ENCODE measurements at regions of chr11 and their contacts with region 1.

Region 1: GRCh38 chr11:45102810-45103621 is 43.4 kb upstream of the PRDM11 start:
- DNase-seq: peak; percentile 66 to 74
- ATAC-seq: peak; percentile 49 to 73; a peak in 5 of 6 replicates
- H3K4me3 ChIP-seq: no peak overlapping the region
- H3K27ac ChIP-seq: peak overlapping the region; percentile 35 to 68; a peak in 4 of 6 replicates
- H3K4me1 ChIP-seq: peaks cover 8% of the 10 kb centered on the region; the same call in 2 of the 3 replicates
- CTCF ChIP-seq: peak; percentile 95
- EP300 ChIP-seq: no peak
- POLR2A ChIP-seq: no peak
- RAD21 ChIP-seq: peak; percentile 97 to 99

Region 2: GRCh38 chr11:44842220-44842619 is 260.8 kb before region 1 on chr11:
- CTCF ChIA-PET with region 1: no interaction called
- POLR2A ChIA-PET with region 1: no interaction called
- DNase-seq: no peak
- ATAC-seq: peak in 1 of 2 experiments; percentile 60; a peak in 3 of 6 replicates
- H3K4me3 ChIP-seq: no peak overlapping the region
- H3K27ac ChIP-seq: no peak overlapping the region
- H3K4me1 ChIP-seq: no peaks in the 10 kb centered on the region
- CTCF ChIP-seq: no peak
- EP300 ChIP-seq: no peak
- POLR2A ChIP-seq: no peak
- RAD21 ChIP-seq: no peak

Region 3: DNA sequence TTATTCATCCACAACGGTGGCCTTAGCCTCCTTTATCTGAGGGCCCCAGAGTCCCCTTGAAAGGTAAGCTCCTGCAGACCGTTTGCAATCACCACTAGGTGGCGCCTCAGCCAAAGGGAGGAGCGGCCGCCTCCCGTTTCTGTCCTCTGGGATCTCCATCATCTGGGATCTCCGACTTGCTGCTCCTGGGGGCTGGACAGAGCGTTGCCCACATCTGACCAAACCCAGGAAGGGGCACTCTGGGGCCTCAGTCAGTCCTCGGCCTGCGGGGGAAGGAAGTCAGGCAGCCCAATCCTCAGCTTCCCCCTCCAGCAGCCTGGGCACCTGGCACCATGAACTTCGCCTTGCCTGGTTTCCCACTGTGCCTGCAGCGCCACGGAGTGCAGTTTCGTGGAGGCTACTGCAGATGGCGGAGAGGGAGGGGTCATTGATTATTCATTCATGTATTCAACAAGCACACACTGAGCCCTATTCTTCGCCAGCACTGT is 175.8 kb before region 1 on chr11:
- CTCF ChIA-PET with region 1: interaction called, 1,740 read pairs
- POLR2A ChIA-PET with region 1: no interaction called
- DNase-seq: peak; percentile 79 to 84
- ATAC-seq: peak; percentile 86 to 93
- H3K4me3 ChIP-seq: no peak overlapping the region
- H3K27ac ChIP-seq: no peak overlapping the region
- H3K4me1 ChIP-seq: no peaks in the 10 kb centered on the region
- CTCF ChIP-seq: peak; percentile 91
- EP300 ChIP-seq: no peak
- POLR2A ChIP-seq: no peak
- RAD21 ChIP-seq: peak; percentile 83 to 89

Region 4: DNA sequence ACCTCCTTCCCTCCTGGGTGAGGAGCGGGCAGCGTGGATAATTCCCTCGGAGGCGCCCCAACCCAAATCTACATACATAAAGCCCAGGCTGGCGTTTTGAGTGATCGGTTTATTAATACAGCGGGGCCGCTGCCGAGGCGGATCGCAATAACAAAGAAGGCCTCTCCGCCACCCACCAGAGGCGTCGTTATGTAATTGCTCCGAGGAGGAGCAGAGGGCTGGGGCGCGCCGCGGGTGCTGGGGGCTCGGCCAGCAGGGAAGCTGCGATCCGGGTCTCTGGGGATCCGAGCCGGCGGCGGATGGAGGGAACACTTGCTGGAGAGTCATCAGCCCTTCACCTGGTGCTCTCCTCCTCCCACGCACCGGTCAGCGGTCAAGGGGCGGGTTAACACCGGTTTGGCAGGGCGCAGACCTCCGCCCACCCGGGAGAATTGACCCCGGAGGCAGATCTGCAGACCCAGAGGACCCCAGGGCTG is 145.9 kb before region 1 on chr11:
- CTCF ChIA-PET with region 1: interaction called, 64 read pairs
- POLR2A ChIA-PET with region 1: no interaction called
- DNase-seq: no peak
- ATAC-seq: no peak
- H3K4me3 ChIP-seq: no peak overlapping the region
- H3K27ac ChIP-seq: no peak overlapping the region
- H3K4me1 ChIP-seq: peaks cover 29% of the 10 kb centered on the region
- CTCF ChIP-seq: no peak
- EP300 ChIP-seq: no peak
- POLR2A ChIP-seq: no peak
- RAD21 ChIP-seq: no peak

Region 5: GRCh38 chr11:45045683-45046471 is 57.1 kb before region 1 on chr11:
- CTCF ChIA-PET with region 1: interaction called, 14 read pairs
- POLR2A ChIA-PET with region 1: no interaction called
- DNase-seq: peak; percentile 56 to 69
- ATAC-seq: peak; percentile 56 to 70
- H3K4me3 ChIP-seq: no peak overlapping the region
- H3K27ac ChIP-seq: peak overlapping the region; percentile 79 to 80
- H3K4me1 ChIP-seq: peaks cover 41% of the 10 kb centered on the region
- CTCF ChIP-seq: no peak
- EP300 ChIP-seq: no peak
- POLR2A ChIP-seq: no peak
- RAD21 ChIP-seq: no peak

Region 6: GRCh38 chr11:45079943-45080719 is 22.9 kb before region 1 on chr11:
- CTCF ChIA-PET with region 1: interaction called, 54 read pairs
- POLR2A ChIA-PET with region 1: no interaction called
- DNase-seq: no peak
- ATAC-seq: no peak
- H3K4me3 ChIP-seq: no peak overlapping the region
- H3K27ac ChIP-seq: no peak overlapping the region
- H3K4me1 ChIP-seq: no peaks in the 10 kb centered on the region
- CTCF ChIP-seq: no peak
- EP300 ChIP-seq: no peak
- POLR2A ChIP-seq: no peak
- RAD21 ChIP-seq: no peak

Region 7: DNA sequence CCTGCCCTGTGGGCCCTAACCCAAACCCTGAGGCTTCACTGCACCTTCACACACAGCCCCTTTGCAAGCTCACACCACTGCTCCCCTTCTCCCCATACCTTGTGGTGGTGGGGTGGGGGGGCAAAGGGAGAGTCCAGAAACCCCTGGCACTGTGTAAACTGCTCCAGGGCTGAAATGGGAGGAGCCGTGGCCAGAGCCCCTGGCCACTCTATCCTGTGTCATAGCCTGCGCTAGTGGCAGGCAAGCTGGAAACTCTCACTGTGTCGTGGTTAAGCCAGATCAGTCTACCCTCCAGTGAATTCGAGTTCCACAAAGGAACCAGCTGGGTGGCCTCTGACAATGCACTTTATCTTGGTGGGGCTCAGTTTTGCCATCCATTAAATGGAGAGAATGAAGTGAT is 191.5 kb after region 1 on chr11:
- CTCF ChIA-PET with region 1: interaction called, 64 read pairs
- POLR2A ChIA-PET with region 1: no interaction called
- DNase-seq: no peak
- ATAC-seq: no peak
- H3K4me3 ChIP-seq: no peak overlapping the region
- H3K27ac ChIP-seq: no peak overlapping the region
- H3K4me1 ChIP-seq: peaks cover 6% of the 10 kb centered on the region
- CTCF ChIP-seq: no peak
- EP300 ChIP-seq: no peak
- POLR2A ChIP-seq: no peak
- RAD21 ChIP-seq: no peak

Region 8: GRCh38 chr11:45339729-45340519 is 236.9 kb after region 1 on chr11:
- CTCF ChIA-PET with region 1: interaction called, 320 read pairs
- POLR2A ChIA-PET with region 1: no interaction called
- DNase-seq: peak; percentile 91 to 95
- ATAC-seq: peak; percentile 90 to 99
- H3K4me3 ChIP-seq: peak overlapping the region; percentile 32
- H3K27ac ChIP-seq: no peak overlapping the region
- H3K4me1 ChIP-seq: no peaks in the 10 kb centered on the region
- CTCF ChIP-seq: peak; percentile 81
- EP300 ChIP-seq: no peak
- POLR2A ChIP-seq: no peak
- RAD21 ChIP-seq: peak; percentile 64 to 66

Region 9: GRCh38 chr11:45828996-45829513 is 726.0 kb after region 1 on chr11:
- CTCF ChIA-PET with region 1: no interaction called
- POLR2A ChIA-PET with region 1: no interaction called
- DNase-seq: no peak
- ATAC-seq: no peak
- H3K4me3 ChIP-seq: no peak overlapping the region
- H3K27ac ChIP-seq: no peak overlapping the region
- H3K4me1 ChIP-seq: no peaks in the 10 kb centered on the region
- CTCF ChIP-seq: no peak
- EP300 ChIP-seq: no peak
- POLR2A ChIP-seq: no peak
- RAD21 ChIP-seq: no peak